ENCODE measurements at regions of chr2 and their contacts with region 1.

Region 1: DNA sequence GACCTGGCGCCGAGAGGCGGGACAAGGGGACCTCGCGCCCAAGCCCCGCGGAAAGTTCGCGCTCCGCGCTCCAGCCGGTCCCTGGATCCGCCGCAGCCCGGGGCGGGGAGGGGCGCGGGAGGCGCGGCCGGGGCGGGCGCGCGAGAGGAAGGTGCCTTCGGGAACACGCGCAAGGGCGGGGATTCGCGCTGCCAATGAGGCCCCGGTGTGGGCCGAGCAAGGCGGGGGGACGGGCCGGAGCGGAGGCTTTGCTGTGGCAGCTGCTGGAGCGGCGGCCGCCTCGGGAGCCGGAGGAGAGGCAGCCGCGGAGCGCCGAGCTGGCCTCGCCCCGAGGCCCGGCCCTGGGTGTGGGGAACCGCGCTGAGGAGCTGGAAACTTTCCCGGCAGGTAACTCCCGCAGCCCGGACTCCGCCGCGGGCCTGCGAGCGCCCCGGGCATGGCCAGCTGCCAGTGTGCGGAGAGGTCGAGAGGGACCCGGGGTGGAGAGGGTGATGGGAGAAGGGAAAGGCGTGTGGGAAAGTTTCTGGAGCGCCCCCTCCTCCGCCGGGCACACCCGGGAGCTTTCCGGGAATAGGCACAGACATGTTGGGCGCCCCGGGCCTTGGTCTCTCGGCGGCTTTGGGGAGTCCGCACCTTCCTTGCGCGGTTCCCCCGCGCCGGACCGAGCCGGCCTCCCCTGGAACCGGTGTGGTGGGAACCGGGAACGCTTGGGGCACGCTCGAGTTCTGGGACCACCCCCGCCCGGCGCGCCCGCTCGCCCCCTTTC is at the start of gene TANC1:
- DNase-seq: peak; percentile 96 to 98
- H3K4me3 ChIP-seq: peak within 1 kb of the TSS; percentile 90
- H3K4me3 Mint-ChIP-seq: peak within 1 kb of the TSS; percentile 98
- H3K27ac Mint-ChIP-seq: peak within 1 kb of the TSS; percentile 84
- H3K4me1 ChIP-seq: peaks cover 16% of the 10 kb centered on the region; the same call in 1 of the 2 replicates
- H3K4me1 Mint-ChIP-seq: peaks cover 17% of the 10 kb centered on the region
- H3K27me3 ChIP-seq: no peaks in the 10 kb centered on the region
- H3K27me3 Mint-ChIP-seq: no peaks in the 10 kb centered on the region
- CTCF ChIP-seq: no peak
- total RNA-seq, gene TANC1: 21.1 and 23.0 TPM in 2 replicates

Region 2: GRCh38 chr2:158948964-158949699 is 19.4 kb before region 1 on chr2:
- CTCF ChIA-PET with region 1: interaction called, 8 read pairs
- POLR2A ChIA-PET with region 1: no interaction called
- intact Hi-C with region 1: loop called (anchors 1 kb)
- DNase-seq: peak in 1 of 2 experiments; percentile 71
- H3K4me3 ChIP-seq: no peak overlapping the region
- H3K4me3 Mint-ChIP-seq: peak overlapping the region; percentile 28
- H3K27ac Mint-ChIP-seq: peak overlapping the region; percentile 13
- H3K4me1 ChIP-seq: peaks cover 34% of the 10 kb centered on the region
- H3K4me1 Mint-ChIP-seq: peaks cover 29% of the 10 kb centered on the region
- H3K27me3 ChIP-seq: no peaks in the 10 kb centered on the region
- H3K27me3 Mint-ChIP-seq: no peaks in the 10 kb centered on the region
- CTCF ChIP-seq: no peak

Region 3: GRCh38 chr2:158994920-158995676 is 26.5 kb after region 1 on chr2:
- CTCF ChIA-PET with region 1: interaction called, 6 read pairs
- POLR2A ChIA-PET with region 1: interaction called, 5 read pairs
- intact Hi-C with region 1: loop called (anchors 1 kb)
- DNase-seq: peak; percentile 64 to 72
- H3K4me3 ChIP-seq: no peak overlapping the region
- H3K4me3 Mint-ChIP-seq: peak overlapping the region; percentile 63
- H3K27ac Mint-ChIP-seq: peak overlapping the region; percentile 57
- H3K4me1 ChIP-seq: peaks cover 50% of the 10 kb centered on the region
- H3K4me1 Mint-ChIP-seq: peaks cover 49% of the 10 kb centered on the region
- H3K27me3 ChIP-seq: no peaks in the 10 kb centered on the region
- H3K27me3 Mint-ChIP-seq: no peaks in the 10 kb centered on the region
- CTCF ChIP-seq: no peak

Region 4: DNA sequence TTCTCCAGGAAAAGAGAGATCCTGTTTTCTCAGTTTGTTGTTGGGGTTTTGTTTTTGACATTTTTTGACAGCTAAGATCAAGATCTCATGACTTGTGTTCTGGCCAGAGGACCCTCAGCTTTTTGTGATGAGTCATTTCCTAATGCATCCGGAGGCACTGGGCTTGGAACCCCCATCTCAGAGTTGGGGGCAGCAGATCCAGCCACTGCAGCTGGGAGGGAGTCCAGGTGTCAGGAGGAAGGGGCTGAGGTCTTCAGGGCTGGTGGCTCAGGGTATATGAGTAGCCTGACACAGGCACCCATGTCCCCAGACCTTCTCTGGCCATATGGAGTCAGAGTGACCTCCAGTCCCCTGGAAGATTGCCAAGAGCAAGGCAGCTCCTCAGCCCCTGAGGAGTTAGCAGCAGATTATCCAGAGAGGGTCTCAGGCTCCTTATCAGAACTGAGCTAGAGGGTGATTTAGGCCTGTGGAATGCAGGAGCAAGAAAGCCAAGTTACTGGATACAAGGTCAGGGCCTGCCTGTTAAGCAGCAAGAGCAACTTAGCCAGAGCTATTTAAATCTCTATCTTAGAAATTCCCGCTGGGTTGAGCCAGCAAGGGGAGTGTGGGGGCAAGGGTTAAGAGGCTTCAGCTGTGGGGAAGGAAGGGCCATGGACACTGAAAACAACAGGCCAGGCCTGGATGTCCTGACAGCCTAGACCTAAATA is 62.2 kb after region 1 on chr2:
- CTCF ChIA-PET with region 1: interaction called, 13 read pairs
- POLR2A ChIA-PET with region 1: interaction called, 3 read pairs
- intact Hi-C with region 1: loop called (anchors 1 kb)
- DNase-seq: peak; percentile 63 to 85
- H3K4me3 ChIP-seq: no peak overlapping the region
- H3K4me3 Mint-ChIP-seq: peak overlapping the region; percentile 42
- H3K27ac Mint-ChIP-seq: peak overlapping the region; percentile 91
- H3K4me1 ChIP-seq: peaks cover 44% of the 10 kb centered on the region
- H3K4me1 Mint-ChIP-seq: peaks cover 55% of the 10 kb centered on the region
- H3K27me3 ChIP-seq: no peaks in the 10 kb centered on the region
- H3K27me3 Mint-ChIP-seq: no peaks in the 10 kb centered on the region
- CTCF ChIP-seq: no peak

Region 5: GRCh38 chr2:159035790-159036411 is 67.3 kb after region 1 on chr2:
- CTCF ChIA-PET with region 1: interaction called, 13 read pairs
- POLR2A ChIA-PET with region 1: interaction called, 3 read pairs
- intact Hi-C with region 1: loop called (anchors 1 kb)
- DNase-seq: peak; percentile 79 to 85
- H3K4me3 ChIP-seq: no peak overlapping the region
- H3K4me3 Mint-ChIP-seq: no peak overlapping the region
- H3K27ac Mint-ChIP-seq: no peak overlapping the region
- H3K4me1 ChIP-seq: peaks cover 30% of the 10 kb centered on the region
- H3K4me1 Mint-ChIP-seq: peaks cover 54% of the 10 kb centered on the region
- H3K27me3 ChIP-seq: no peaks in the 10 kb centered on the region
- H3K27me3 Mint-ChIP-seq: no peaks in the 10 kb centered on the region
- CTCF ChIP-seq: peak; percentile 54 to 72

Measured in Caco-2 (cell line).